Ovary (tissue), 10 donors: ENCODE measurements at regions of chr3 and their contacts with region 1.

Region 1: DNA sequence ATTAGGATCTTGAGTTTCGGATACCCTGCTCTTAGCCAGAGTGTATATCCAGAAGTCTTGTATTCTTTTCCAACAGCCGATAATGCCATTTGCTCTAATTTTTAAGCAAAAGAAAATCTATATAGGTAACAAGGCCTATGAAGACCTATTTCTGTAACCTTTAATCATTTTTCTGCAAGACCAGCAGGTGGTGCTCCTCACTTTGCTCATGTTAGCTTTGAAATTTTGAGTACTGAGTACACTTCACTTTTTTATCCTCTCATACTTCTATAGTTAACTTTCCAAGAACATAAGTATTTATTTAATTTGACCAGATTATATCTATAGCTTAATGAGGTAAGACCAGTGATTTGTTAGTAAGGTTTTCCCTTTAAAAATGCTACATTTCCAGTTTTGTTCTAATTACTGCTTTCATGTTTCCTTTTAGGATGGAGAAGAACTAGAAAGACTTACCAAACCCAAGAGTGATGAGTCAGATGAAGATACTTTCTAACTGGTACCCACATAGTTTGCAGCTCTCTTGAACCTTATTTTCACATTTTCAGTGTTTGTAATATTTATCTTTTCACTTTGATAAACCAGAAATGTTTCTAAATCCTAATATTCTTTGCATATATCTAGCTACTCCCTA is 20.5 kb downstream of the SLC35A5 start:
- DNase-seq: peak in 4 of 5 donors; percentile 34 to 48 (median 42)
- H3K4me3 ChIP-seq: no peak overlapping the region
- H3K27ac ChIP-seq: no peak overlapping the region
- H3K4me1 ChIP-seq: peaks cover 2% of the 10 kb centered on the region
- H3K27me3 ChIP-seq: no peaks in the 10 kb centered on the region
- CTCF ChIP-seq: peak; percentile 13 to 60 (median 46)
- EP300 ChIP-seq: no peak
- POLR2A ChIP-seq: no peak

Region 2: GRCh38 chr3:112635671-112636070 is 53.3 kb after region 1 on chr3:
- intact Hi-C with region 1: loop called in 2 of 4 experiments (anchors 10 kb)
- DNase-seq: peak in 4 of 5 donors; percentile 58 to 72 (median 67)
- H3K4me3 ChIP-seq: peak overlapping the region; percentile 24
- H3K27ac ChIP-seq: peak overlapping the region in 1 of 2 donors; percentile 76
- H3K4me1 ChIP-seq: peaks cover 22% of the 10 kb centered on the region
- H3K27me3 ChIP-seq: no peaks in the 10 kb centered on the region
- CTCF ChIP-seq: no peak
- EP300 ChIP-seq: no peak
- POLR2A ChIP-seq: no peak

Region 3: GRCh38 chr3:112814266-112814665 is 231.9 kb after region 1 on chr3:
- intact Hi-C with region 1: loop called in 2 of 4 experiments (anchors 5 to 10 kb)
- DNase-seq: no peak
- H3K4me3 ChIP-seq: no peak overlapping the region
- H3K27ac ChIP-seq: no peak overlapping the region
- H3K4me1 ChIP-seq: peaks cover 11% of the 10 kb centered on the region
- H3K27me3 ChIP-seq: no peaks in the 10 kb centered on the region
- CTCF ChIP-seq: peak in 2 of 3 donors; percentile 29 to 41
- EP300 ChIP-seq: no peak
- POLR2A ChIP-seq: no peak

Region 4: DNA sequence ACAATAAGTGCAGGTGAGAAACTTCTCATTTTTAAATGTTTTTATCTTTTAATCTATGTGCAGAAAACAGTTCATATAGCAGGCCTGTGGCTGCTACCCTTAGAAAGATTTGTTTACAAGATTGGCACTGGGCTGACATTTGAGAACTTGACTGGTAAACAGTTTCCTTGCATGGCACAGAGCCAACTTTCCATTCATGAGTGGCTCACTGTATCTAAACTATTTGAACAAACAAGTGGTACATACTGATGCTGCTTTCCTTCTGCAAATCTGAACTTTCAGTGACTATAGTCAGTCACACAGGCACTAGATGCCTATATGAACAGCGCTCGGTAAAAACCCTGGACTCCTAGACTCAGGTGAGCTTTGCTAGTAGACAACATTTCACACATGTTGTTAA is 402.1 kb after region 1 on chr3:
- intact Hi-C with region 1: loop called in 1 of 4 experiments (anchors 10 kb)
- DNase-seq: no peak
- H3K4me3 ChIP-seq: no peak overlapping the region
- H3K27ac ChIP-seq: no peak overlapping the region
- H3K4me1 ChIP-seq: no peaks in the 10 kb centered on the region
- H3K27me3 ChIP-seq: no peaks in the 10 kb centered on the region
- CTCF ChIP-seq: no peak
- EP300 ChIP-seq: no peak
- POLR2A ChIP-seq: no peak